Activated naive CD4-positive, alpha-beta T cell treated with anti-CD3 and anti-CD28 coated beads, Interleukin-2, amount 10 ng/mL, durations not matched to agents 7 days and 5 days (primary cell): ENCODE measurements at regions of chrX and their contacts with region 1.

Region 1: DNA sequence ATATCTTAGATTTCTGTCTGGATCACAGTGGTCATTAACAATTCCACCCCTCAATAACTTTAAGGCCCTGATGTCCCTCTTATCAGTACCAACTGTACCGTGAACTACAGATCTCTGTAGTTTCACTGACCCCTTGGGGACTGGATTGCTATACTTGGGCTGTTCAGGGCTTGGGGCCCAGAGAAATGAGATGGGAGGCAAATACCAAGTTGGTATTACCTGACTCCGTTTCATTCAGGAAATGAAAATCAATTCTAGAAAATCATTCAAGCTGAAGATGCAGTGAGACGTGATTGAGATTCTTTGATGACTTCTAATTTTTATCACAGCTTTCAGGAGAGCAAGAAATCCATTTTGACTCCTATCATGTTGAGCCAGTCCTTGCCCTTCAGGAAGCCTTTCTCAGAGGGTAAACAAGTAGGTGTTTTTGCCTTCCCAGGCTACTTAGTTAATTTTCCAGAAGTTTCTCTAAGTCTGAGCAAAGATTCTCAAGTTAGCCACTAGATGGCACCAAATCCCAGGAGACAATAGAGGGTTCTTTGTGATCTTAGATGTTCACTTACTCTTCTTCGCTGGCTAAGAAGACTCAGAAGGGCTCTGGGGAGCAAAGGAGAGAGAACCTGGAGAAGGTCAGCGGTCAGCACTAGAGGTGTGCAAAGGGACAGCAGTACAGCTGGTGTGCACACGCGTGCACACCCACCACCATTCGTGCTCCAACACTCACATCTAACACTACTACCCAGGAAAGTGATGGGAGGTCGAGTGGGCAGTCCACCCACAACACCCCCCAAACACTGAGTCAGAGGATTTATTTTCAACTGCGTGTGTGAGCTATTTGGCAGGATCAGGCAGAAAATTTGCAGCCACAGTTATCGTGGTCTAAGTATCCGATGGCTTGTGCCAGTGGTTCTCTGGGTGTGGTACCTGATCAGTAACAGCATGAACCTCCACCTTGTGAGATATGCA is 7.4 kb downstream of the HNRNPH2 start:
- DNase-seq: peak; percentile 29
- H3K4me3 Mint-ChIP-seq: no peak overlapping the region
- H3K27ac Mint-ChIP-seq: peak overlapping the region; percentile 52
- H3K4me1 Mint-ChIP-seq: peaks cover 52% of the 10 kb centered on the region
- H3K27me3 Mint-ChIP-seq: peaks cover 3% of the 10 kb centered on the region

Region 2: GRCh38 chrX:101759000-101759399 is 343.5 kb after region 1 on chrX:
- CTCF ChIA-PET with region 1: interaction called, 18 read pairs
- DNase-seq: peak; percentile 42
- H3K4me3 Mint-ChIP-seq: no peak overlapping the region
- H3K27ac Mint-ChIP-seq: peak overlapping the region; percentile 24
- H3K4me1 Mint-ChIP-seq: peaks cover 3% of the 10 kb centered on the region
- H3K27me3 Mint-ChIP-seq: peaks cover 7% of the 10 kb centered on the region